ENCODE measurements at regions of chr11 and their contacts with region 1.

Region 1: DNA sequence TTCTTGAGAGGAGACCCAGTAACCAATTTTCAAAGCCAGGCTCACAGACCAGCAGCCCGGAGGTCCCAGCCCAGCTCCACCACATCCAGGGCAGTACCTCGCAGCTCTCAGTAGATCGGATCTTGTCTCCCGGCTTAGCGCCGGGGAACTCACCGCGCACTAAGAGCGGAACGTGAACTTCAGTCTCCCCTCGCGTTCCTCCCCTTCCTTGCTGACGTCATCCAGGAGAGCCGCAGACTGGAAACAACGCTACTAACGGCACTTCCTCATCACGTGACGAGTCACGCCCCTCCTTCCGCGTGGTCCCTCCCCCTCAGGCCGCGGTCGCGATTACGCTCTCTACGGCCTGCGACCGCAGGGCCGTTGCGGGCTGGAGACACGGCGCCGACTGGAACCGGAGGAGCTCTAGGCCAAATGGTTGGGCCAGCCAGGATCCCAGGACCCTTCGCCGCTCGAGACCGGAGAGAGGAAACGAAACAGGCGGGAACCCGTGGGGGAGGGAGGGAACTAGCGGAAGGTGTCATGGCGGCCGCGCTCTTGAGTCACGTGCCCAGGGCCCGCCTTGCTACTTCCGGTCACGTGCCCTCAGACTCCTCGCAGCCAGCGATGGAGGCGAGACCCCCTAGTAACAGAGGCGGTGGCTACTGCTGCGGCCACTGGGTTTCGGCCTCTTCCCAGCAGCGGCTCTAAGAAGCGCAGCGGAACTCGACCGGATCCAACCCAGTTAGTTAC is at the starts of genes GTF2H1 and HPS5:
- DNase-seq: peak; percentile 96
- ATAC-seq: peak; percentile 99
- total RNA-seq, gene GTF2H1: 24.4 TPM
- total RNA-seq, gene HPS5: 11.4 TPM

Region 2: DNA sequence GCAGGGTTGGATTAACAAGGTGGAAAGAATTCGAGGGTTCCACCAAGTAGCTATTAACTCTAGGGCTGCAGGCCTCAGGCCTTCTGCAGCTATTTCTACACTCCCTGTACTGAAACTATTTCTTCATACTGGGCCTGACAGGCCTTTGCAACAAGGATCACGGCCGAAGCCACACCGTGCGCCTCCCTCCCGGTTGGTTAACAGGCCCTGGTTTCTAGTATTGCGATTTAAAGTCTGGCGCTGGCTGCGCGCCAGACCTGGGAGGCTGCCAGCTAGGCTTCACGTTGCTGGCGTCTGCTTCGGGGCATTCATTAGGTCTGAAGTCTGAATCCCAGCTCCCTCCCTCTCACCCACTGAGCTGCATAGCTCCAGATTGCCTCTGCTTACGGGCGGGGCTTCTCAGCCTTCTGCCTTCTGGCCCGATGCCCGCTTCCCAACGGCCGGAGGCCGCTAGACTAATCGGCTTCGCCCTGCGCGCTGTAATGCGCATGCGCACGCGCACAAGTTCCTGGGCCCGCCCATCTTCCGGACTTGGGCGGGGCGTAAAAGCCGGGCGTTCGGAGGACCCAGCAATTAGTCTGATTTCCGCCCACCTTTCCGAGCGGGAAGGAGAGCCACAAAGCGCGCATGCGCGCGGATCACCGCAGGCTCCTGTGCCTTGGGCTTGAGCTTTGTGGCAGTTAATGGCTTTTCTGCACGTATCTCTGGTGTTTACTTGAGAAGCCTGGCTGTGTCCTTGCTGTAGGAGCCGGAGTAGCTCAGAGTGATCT is 73.8 kb after region 1 on chr11:
- intact Hi-C with region 1: loop called (anchors 5 kb)
- DNase-seq: peak; percentile 99
- ATAC-seq: peak; percentile 92

Measured in Right ventricle myocardium superior (tissue), 1 donor.